Right ventricle myocardium inferior (tissue), 1 donor: ENCODE measurements at regions of chr1 and their contacts with region 1.

Region 1: GRCh38 chr1:230867903-230868735 is at the start of gene C1orf198:
- DNase-seq: peak; percentile 86
- ATAC-seq: peak; percentile 91
- total RNA-seq, gene C1orf198: 46.0 TPM

Region 2: GRCh38 chr1:230758709-230759368 is 109.3 kb before region 1 on chr1:
- intact Hi-C with region 1: no loop called
- DNase-seq: no peak
- ATAC-seq: no peak

Region 3: DNA sequence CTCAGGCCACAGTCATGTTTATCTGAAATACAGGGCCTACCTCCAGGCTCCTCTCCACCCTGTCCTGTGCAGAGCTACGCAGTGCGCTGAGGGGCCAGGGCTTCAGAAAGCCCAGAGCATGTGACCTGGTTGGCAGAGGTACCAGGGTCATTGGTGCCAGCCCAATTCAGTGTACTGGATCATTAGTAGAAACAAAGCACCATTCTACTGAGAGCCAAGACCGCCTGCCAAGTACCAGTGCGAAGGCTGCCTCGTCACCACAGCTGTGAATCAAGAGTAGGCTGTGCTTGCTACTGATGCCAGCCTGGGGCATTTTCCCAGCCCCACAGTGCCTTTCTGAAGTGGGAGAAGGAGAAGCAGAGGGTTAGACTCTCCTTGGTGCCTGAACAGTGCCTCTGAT is 61.1 kb before region 1 on chr1:
- intact Hi-C with region 1: loop called (anchors 2 kb)
- DNase-seq: peak; percentile 81
- ATAC-seq: peak; percentile 96

Region 4: GRCh38 chr1:230825063-230825721 is 42.9 kb before region 1 on chr1:
- intact Hi-C with region 1: loop called (anchors 5 kb)
- DNase-seq: no peak
- ATAC-seq: peak; percentile 55

Region 5: GRCh38 chr1:230849451-230850224 is 18.5 kb before region 1 on chr1:
- intact Hi-C with region 1: loop called (anchors 1 kb)
- DNase-seq: no peak
- ATAC-seq: peak; percentile 91

Region 6: GRCh38 chr1:230917284-230918135 is 49.4 kb after region 1 on chr1:
- intact Hi-C with region 1: loop called (anchors 5 kb)
- DNase-seq: peak; percentile 67
- ATAC-seq: peak; percentile 86